GM13977 (cell line): ENCODE measurements at regions of chr4 and their contacts with region 1.

Region 1: DNA sequence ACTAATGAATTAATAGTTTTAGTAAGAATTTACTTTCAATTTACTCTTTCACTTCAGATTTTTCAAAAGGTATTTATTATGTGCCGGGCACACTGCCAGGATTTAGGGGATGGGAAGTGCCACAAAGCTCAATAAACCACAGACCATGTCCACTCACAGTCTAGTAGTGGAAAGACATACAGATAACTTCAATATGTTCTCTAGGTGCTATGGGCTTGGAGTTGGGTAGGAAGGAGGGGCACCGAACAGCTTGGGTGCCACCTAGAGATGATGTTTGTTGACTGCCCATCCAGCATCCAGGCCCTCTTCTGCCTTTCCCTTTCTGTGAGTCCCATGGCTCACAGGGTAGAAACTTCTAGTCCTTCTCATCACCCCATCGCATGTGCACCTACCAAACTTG is 17.8 kb downstream of the MFAP3L start:
- DNase-seq: no peak
- CTCF ChIP-seq: peak; percentile 14

Region 2: DNA sequence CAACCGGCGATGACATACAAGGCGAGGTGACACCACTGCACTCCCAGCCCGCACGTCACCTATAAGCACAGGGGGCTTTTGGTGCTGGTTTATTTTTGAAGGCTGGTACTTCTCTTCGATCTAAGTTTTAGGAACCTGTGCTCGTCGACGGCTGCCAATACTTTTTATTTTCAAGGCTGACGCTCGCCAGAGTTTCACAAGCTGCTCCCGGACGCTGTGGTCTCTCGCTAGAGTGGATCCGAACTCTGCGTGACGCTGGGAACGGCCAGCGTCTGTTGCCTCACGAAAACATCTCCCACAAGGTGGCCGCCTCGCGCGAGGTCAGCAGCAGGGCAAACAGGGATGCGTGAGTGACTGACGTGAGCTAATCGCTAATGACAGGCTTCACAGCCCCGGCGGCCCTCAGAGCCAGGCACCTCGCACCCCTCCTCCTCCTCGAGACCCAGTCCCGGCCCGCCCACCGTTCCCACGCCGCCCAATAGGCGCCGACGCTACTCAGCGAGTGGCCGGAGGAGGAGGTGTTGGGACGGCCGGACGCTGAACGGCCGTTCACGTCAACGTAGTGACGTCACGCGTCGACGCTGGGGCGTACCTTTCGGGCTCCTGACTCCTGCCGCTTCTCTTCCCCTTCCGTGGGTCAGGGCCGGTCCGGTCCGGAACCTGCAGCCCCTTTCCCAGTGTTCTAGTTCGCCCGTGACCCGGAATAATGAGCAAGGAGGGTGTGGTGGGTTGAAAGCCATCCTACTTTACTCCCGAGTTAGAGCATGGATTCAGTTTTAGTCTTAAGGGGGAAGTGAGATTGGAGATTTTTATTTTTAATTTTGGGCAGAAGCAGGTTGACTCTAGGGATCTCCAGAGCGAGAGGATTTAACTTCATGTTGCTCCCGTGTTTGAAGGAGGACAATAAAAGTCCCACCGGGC is 388.2 kb before region 1 on chr4 and contains the start of gene CLCN3:
- in situ Hi-C with region 1: loop called (anchors 25 kb)
- DNase-seq: peak; percentile 92
- CTCF ChIP-seq: no peak